Dorsolateral prefrontal cortex (tissue), 120 donors: ENCODE measurements at regions of chr5 and their contacts with region 1.

Region 1: DNA sequence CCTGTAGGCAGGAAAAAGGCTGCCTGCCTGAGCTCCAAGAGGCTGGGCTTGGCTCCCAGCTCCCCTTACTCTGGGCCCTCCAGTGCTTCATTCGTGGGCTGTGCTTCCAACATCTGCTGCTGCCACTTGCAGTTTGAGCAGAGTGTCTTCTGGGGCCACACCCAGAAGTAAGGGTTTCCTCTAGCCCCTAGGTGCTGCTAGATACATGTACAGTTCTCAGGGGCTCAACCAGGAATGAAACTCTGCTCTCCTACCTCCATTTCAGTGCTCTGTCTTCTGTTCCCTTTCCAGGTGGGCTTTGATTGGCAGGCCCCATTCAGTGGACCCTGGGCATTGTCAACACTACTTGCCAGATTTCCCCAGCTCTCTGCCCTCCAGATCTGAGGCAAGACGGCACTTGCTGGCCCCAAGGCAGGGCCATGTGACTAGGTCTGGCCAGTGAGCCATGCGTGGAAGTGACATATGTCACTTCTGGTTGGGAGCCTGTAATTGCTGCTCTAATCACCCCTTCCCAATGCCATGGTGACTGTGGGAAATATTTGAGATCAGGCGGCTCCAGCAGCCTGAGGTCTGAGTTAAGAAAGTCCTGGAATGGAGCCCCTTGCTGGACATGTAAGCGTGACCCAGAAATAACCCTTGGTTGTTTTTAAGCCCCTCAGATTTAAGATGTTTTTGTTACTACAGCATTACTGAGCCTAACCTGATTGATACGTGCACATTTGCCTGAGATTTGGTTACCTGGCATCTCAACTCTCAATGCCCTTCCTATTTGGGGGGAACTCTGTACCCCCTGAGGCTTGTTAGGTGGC is 9.4 kb upstream of the BOD1 start:
- DNase-seq: peak in 1 of 10 donors; percentile 32
- H3K4me3 ChIP-seq: no peak overlapping the region
- H3K27ac ChIP-seq: peak overlapping the region; percentile 31 to 93 (median 84)
- H3K27me3 ChIP-seq: no peaks in the 10 kb centered on the region
- CTCF ChIP-seq: no peak

Region 2: GRCh38 chr5:173671121-173671949 is 45.4 kb after region 1 on chr5:
- intact Hi-C with region 1: loop called (anchors 5 kb)
- DNase-seq: peak; percentile 57 to 92 (median 86)
- H3K4me3 ChIP-seq: peak overlapping the region in 54 of 59 donors; percentile 3 to 55 (median 27)
- H3K27ac ChIP-seq: peak overlapping the region; percentile 29 to 95 (median 86)
- H3K27me3 ChIP-seq: no peaks in the 10 kb centered on the region
- CTCF ChIP-seq: peak in 1 of 56 donors; percentile 12

Region 3: DNA sequence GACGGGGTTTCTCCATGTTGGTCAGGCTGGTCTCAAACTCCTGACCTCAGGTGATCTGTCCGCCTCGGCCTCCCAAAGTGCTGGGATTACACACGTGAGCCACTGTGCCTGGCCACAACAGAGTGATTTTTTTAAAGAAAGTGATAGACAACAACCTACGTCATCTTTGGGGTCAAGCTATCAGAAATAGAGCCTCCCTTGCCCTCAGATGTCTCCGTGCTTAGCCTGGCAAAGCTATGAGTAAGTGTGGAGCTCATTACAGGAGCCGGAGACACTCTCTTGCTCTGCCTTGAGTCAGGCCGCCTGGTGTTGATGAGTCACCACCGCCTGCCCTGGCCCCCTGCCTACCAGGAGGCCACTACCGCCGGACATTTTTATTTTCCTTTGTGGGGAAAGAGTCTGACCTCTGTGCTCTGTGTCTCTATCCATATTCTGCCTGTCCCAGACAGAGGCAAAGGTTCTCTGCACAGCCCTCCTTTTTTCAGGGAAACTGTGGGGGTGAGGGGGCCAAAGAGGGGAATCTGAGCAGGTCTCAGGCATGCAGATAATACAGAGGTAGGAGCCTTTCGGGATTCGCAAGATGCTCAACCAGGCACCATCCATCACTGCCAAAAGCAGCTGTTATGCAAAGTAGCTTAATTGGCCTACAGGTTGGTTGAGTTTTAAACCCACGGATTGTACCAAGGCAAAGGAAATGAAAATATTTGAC is 138.6 kb after region 1 on chr5:
- intact Hi-C with region 1: loop called in 1 of 2 experiments (anchors 10 kb)
- DNase-seq: peak in 5 of 10 donors; percentile 39 to 85 (median 51)
- H3K4me3 ChIP-seq: no peak overlapping the region
- H3K27ac ChIP-seq: peak overlapping the region in 14 of 59 donors; percentile 0 to 53 (median 19)
- H3K27me3 ChIP-seq: no peaks in the 10 kb centered on the region
- CTCF ChIP-seq: no peak

Region 4: GRCh38 chr5:173781814-173782670 is 156.1 kb after region 1 on chr5:
- intact Hi-C with region 1: loop called in 1 of 2 experiments (anchors 5 kb)
- DNase-seq: peak; percentile 56 to 94 (median 85)
- H3K4me3 ChIP-seq: peak overlapping the region in 15 of 59 donors; percentile 1 to 36 (median 11)
- H3K27ac ChIP-seq: peak overlapping the region; percentile 53 to 98 (median 87)
- H3K27me3 ChIP-seq: no peaks in the 10 kb centered on the region
- CTCF ChIP-seq: peak in 2 of 56 donors; percentile 9 to 10